ENCODE measurements at regions of chr9 and their contacts with region 1.

Region 1: GRCh38 chr9:21638104-21638503 is 156.0 kb upstream of the IFNE start:
- DNase-seq: no peak
- ATAC-seq: no peak
- H3K4me3 ChIP-seq: no peak overlapping the region
- H3K4me3 Mint-ChIP-seq: no peak overlapping the region
- H3K27ac ChIP-seq: no peak overlapping the region
- H3K27ac Mint-ChIP-seq: no peak overlapping the region
- H3K4me1 ChIP-seq: no peaks in the 10 kb centered on the region
- H3K4me1 Mint-ChIP-seq: peaks cover 0 to 5% (median 0%) of the 10 kb centered on the region in 7 donors
- H3K27me3 ChIP-seq: no peaks in the 10 kb centered on the region
- H3K27me3 Mint-ChIP-seq: peaks cover 0 to 4% (median 0%) of the 10 kb centered on the region in 5 donors

Region 2: GRCh38 chr9:21434202-21435014 is 203.7 kb before region 1 on chr9:
- CTCF ChIA-PET with region 1: no interaction called
- POLR2A ChIA-PET with region 1: no interaction called
- intact Hi-C with region 1: no loop called
- DNase-seq: peak in 7 of 9 donors; percentile 20 to 60 (median 50)
- ATAC-seq: peak; percentile 62
- H3K4me3 ChIP-seq: no peak overlapping the region
- H3K4me3 Mint-ChIP-seq: no peak overlapping the region
- H3K27ac ChIP-seq: no peak overlapping the region
- H3K27ac Mint-ChIP-seq: no peak overlapping the region
- H3K4me1 ChIP-seq: no peaks in the 10 kb centered on the region
- H3K4me1 Mint-ChIP-seq: no peaks in the 10 kb centered on the region
- H3K27me3 ChIP-seq: no peaks in the 10 kb centered on the region
- H3K27me3 Mint-ChIP-seq: peaks cover 22 to 52% (median 34%) of the 10 kb centered on the region in 5 donors

Region 3: GRCh38 chr9:21624675-21625644 is 13.1 kb before region 1 on chr9:
- CTCF ChIA-PET with region 1: interaction called, 6 read pairs
- POLR2A ChIA-PET with region 1: no interaction called
- intact Hi-C with region 1: loop called in 1 of 2 experiments (anchors 2 kb)
- DNase-seq: no peak
- ATAC-seq: no peak
- H3K4me3 ChIP-seq: no peak overlapping the region
- H3K4me3 Mint-ChIP-seq: peak overlapping the region in 1 of 10 donors; percentile 17
- H3K27ac ChIP-seq: no peak overlapping the region
- H3K27ac Mint-ChIP-seq: peak overlapping the region in 2 of 9 donors; percentile 23 to 32
- H3K4me1 ChIP-seq: peaks cover 0 to 9% of the 10 kb centered on the region in 2 donors
- H3K4me1 Mint-ChIP-seq: peaks cover 9 to 31% (median 20%) of the 10 kb centered on the region in 7 donors
- H3K27me3 ChIP-seq: no peaks in the 10 kb centered on the region
- H3K27me3 Mint-ChIP-seq: peaks cover 0 to 11% (median 0%) of the 10 kb centered on the region in 5 donors

Region 4: GRCh38 chr9:21668516-21668915 is 30.4 kb after region 1 on chr9:
- CTCF ChIA-PET with region 1: no interaction called
- POLR2A ChIA-PET with region 1: no interaction called
- intact Hi-C with region 1: no loop called
- DNase-seq: no peak
- ATAC-seq: no peak
- H3K4me3 ChIP-seq: no peak overlapping the region
- H3K4me3 Mint-ChIP-seq: no peak overlapping the region
- H3K27ac ChIP-seq: no peak overlapping the region
- H3K27ac Mint-ChIP-seq: no peak overlapping the region
- H3K4me1 ChIP-seq: peaks cover 0 to 8% of the 10 kb centered on the region in 2 donors
- H3K4me1 Mint-ChIP-seq: peaks cover 4 to 28% (median 18%) of the 10 kb centered on the region in 7 donors
- H3K27me3 ChIP-seq: peaks cover 0 to 4% of the 10 kb centered on the region in 2 donors
- H3K27me3 Mint-ChIP-seq: no peaks in the 10 kb centered on the region

Region 5: DNA sequence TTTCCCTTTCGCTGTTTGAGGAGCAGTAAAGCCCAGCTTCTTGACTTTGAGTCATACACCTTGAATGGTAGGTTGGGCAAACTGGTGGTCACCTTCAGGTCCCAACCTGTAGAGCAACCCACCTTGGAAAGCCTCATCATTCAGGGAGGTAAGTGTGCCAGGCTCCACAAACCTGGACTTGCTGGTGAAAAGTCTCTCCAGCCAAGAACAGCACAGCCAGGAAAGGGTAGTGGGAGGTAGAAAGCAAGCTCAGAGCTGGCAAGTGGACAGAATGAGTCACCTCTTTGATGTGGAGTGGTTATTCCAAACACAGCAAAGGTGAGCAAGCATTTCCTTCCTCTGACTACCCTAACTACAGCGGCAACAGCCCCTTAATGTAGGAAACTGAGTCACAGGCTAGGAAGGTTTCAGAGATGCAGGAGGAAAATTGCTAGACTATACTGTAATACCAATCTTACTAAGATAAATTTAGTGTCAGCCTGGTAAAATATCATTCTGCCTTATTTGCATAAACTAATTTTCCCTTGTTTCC is 46.8 kb after region 1 on chr9:
- CTCF ChIA-PET with region 1: no interaction called
- POLR2A ChIA-PET with region 1: no interaction called
- intact Hi-C with region 1: no loop called
- DNase-seq: peak in 1 of 9 donors; percentile 39
- ATAC-seq: no peak
- H3K4me3 ChIP-seq: no peak overlapping the region
- H3K4me3 Mint-ChIP-seq: no peak overlapping the region
- H3K27ac ChIP-seq: no peak overlapping the region
- H3K27ac Mint-ChIP-seq: peak overlapping the region in 1 of 9 donors; percentile 29
- H3K4me1 ChIP-seq: no peaks in the 10 kb centered on the region
- H3K4me1 Mint-ChIP-seq: peaks cover 0 to 14% (median 10%) of the 10 kb centered on the region in 7 donors
- H3K27me3 ChIP-seq: no peaks in the 10 kb centered on the region
- H3K27me3 Mint-ChIP-seq: no peaks in the 10 kb centered on the region

Measured in naive thymus-derived CD4-positive, alpha-beta T cell (primary cell).